Activated CD4-positive, alpha-beta T cell treated with anti-CD3 and anti-CD28 coated beads, Interleukin-2, amount 10 ng/mL, durations not matched to agents 24 days and 14 days (primary cell): ENCODE measurements at regions of chr10 and their contacts with region 1.

Region 1: DNA sequence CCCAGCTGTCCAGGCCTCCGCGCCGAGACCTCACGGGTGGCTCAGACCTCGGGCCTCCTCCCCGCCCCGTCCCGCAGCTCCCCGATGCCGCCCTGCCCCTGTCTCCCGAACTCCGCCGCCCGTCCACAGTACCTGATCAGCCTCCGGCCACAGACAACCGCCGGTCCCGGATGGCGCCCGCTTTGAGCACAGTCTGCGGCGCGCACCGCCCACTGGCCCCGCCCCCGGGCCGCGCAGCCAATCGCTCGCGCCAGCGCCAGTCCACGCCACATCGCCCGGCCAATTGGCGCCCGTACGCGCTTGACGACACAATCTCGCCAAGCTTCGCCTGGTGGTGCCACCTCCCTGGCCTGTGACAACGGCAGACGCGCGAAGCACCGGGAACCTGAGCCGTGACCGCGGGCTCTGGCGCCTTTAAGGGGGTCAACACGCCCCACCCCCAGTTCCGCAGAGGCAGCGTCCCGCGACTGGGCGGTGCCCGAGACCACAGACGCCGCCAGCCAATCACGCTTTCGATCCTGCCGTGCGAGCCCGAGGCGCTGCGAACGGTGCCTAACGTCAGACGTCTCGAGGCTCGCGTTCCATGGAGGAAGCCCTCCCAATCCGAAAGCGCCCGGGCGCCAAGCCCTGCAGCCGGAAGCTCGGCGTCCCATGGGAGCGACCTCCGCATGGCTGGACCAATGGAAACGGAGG is at the start of gene IDI1:
- DNase-seq: peak; percentile 99
- H3K4me3 Mint-ChIP-seq: peak within 1 kb of the TSS; percentile 95
- H3K27ac Mint-ChIP-seq: peak within 1 kb of the TSS; percentile 95
- H3K4me1 Mint-ChIP-seq: peaks cover 55% of the 10 kb centered on the region
- H3K27me3 Mint-ChIP-seq: no peaks in the 10 kb centered on the region
- total RNA-seq, gene IDI1: 74.6 and 75.5 TPM in 2 replicates

Region 2: GRCh38 chr10:689433-690371 is 359.2 kb before region 1 on chr10 and contains the start of gene DIP2C:
- intact Hi-C with region 1: no loop called
- DNase-seq: no peak
- H3K4me3 Mint-ChIP-seq: peak within 1 kb of the TSS; percentile 46
- H3K27ac Mint-ChIP-seq: no peak within 1 kb of the TSS
- H3K4me1 Mint-ChIP-seq: no peaks in the 10 kb centered on the region
- H3K27me3 Mint-ChIP-seq: peaks cover 40% of the 10 kb centered on the region
- total RNA-seq, gene DIP2C: 1.4 and 1.9 TPM in 2 replicates

Region 3: GRCh38 chr10:931416-932318 is 117.2 kb before region 1 on chr10 and contains the start of gene LARP4B:
- intact Hi-C with region 1: loop called (anchors 1 kb)
- DNase-seq: peak; percentile 100
- H3K4me3 Mint-ChIP-seq: peak within 1 kb of the TSS; percentile 92
- H3K27ac Mint-ChIP-seq: peak within 1 kb of the TSS; percentile 96
- H3K4me1 Mint-ChIP-seq: peaks cover 30% of the 10 kb centered on the region
- H3K27me3 Mint-ChIP-seq: no peaks in the 10 kb centered on the region
- total RNA-seq, gene LARP4B: 167 and 169 TPM in 2 replicates

Region 4: GRCh38 chr10:1010703-1011102 is 38.2 kb before region 1 on chr10:
- intact Hi-C with region 1: loop called (anchors 1 kb)
- DNase-seq: no peak
- H3K4me3 Mint-ChIP-seq: peak overlapping the region; percentile 51
- H3K27ac Mint-ChIP-seq: peak overlapping the region; percentile 97
- H3K4me1 Mint-ChIP-seq: peaks cover 21% of the 10 kb centered on the region
- H3K27me3 Mint-ChIP-seq: no peaks in the 10 kb centered on the region

Region 5: DNA sequence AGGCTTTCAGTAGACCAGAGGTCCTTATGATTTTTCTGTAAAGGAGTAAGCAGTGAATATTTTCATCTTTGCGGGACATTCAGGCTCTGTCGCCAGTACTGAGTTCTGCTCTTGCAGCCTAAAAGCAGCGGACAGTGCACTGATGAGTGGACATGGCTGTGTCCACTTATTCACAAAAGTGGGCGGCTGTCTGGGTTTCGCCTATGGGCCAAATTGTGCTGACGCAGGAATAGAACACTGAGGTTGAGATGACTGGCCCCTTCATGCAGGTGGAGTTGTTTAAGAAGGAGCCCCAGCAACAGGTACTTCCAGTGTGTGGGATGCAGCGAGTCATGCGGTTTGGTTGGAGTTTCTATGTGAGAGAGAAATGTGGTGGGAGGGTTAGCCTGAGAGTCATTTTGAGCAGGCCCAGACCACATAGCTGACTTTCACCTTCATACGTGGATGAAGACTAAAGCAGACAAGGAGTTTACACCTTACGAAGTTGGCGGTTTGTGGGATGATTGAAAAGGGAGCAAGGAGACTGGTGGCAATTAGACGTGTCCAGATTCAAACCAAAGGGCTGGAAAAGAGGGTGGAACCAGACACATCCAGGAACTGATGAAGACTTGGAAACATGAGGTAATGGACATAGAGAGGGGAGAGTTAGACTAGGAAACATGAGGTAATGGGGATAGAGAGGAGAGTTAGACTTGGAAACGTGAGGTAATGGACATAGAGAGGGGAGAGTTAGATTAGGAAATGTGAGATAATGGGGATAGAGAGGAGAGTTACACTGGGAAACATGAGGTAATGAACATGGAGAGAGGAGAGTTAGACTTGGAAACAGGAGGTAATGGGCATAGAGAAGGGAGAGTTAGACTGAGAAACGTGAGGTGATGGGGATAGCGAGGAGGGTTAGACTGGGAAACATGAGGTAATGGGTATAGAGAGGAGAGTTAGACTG is 45.5 kb after region 1 on chr10:
- intact Hi-C with region 1: loop called (anchors 2 kb)
- DNase-seq: peak; percentile 73
- H3K4me3 Mint-ChIP-seq: no peak overlapping the region
- H3K27ac Mint-ChIP-seq: no peak overlapping the region
- H3K4me1 Mint-ChIP-seq: peaks cover 15% of the 10 kb centered on the region
- H3K27me3 Mint-ChIP-seq: no peaks in the 10 kb centered on the region

Region 6: GRCh38 chr10:1448252-1448929 is 399.5 kb after region 1 on chr10:
- intact Hi-C with region 1: no loop called
- DNase-seq: no peak
- H3K4me3 Mint-ChIP-seq: no peak overlapping the region
- H3K27ac Mint-ChIP-seq: no peak overlapping the region
- H3K4me1 Mint-ChIP-seq: no peaks in the 10 kb centered on the region
- H3K27me3 Mint-ChIP-seq: no peaks in the 10 kb centered on the region